CD4-positive, alpha-beta T cell (primary cell): ENCODE measurements at regions of chr18 and their contacts with region 1.

Region 1: DNA sequence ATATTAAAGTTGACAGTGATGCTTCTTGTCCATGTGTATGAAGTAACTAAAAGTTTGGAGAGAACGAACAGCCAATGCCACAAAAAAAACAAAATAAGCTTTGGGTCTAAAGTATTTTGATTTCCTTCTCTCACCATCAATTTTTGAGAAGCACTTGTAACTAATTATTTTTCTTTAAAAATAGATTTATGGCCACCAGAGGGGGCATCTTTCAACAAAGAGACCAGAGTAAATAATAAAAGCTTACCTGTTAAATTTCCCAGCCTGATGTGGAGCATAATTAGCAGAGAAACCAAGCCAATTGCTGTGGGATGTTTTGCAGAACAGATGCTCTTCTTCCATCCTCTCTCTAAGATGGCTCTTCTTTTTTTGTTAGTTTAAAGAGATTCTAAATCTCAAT is 29.0 kb downstream of the LINC00305 start:
- DNase-seq: no peak
- ATAC-seq: no peak
- H3K4me3 ChIP-seq: no peak overlapping the region
- H3K4me3 Mint-ChIP-seq: no peak overlapping the region
- H3K27ac ChIP-seq: no peak overlapping the region
- H3K27ac Mint-ChIP-seq: no peak overlapping the region
- H3K4me1 ChIP-seq: no peaks in the 10 kb centered on the region
- H3K4me1 Mint-ChIP-seq: no peaks in the 10 kb centered on the region
- H3K27me3 ChIP-seq: no peaks in the 10 kb centered on the region
- H3K27me3 Mint-ChIP-seq: no peaks in the 10 kb centered on the region
- CTCF ChIP-seq: no peak

Region 2: GRCh38 chr18:63410792-63411191 is 709.1 kb before region 1 on chr18:
- CTCF ChIA-PET with region 1: no interaction called
- POLR2A ChIA-PET with region 1: no interaction called
- intact Hi-C with region 1: no loop called
- DNase-seq: no peak
- ATAC-seq: no peak
- H3K4me3 ChIP-seq: no peak overlapping the region
- H3K4me3 Mint-ChIP-seq: no peak overlapping the region
- H3K27ac ChIP-seq: no peak overlapping the region
- H3K27ac Mint-ChIP-seq: peak overlapping the region; percentile 73
- H3K4me1 ChIP-seq: peaks cover 11% of the 10 kb centered on the region
- H3K4me1 Mint-ChIP-seq: peaks cover 57% of the 10 kb centered on the region
- H3K27me3 ChIP-seq: no peaks in the 10 kb centered on the region
- H3K27me3 Mint-ChIP-seq: no peaks in the 10 kb centered on the region
- CTCF ChIP-seq: no peak

Region 3: GRCh38 chr18:64171576-64171975 is 51.7 kb after region 1 on chr18:
- CTCF ChIA-PET with region 1: no interaction called
- POLR2A ChIA-PET with region 1: no interaction called
- intact Hi-C with region 1: loop called in 1 of 2 experiments (anchors 5 kb)
- DNase-seq: no peak
- ATAC-seq: no peak
- H3K4me3 ChIP-seq: no peak overlapping the region
- H3K4me3 Mint-ChIP-seq: no peak overlapping the region
- H3K27ac ChIP-seq: no peak overlapping the region
- H3K27ac Mint-ChIP-seq: no peak overlapping the region
- H3K4me1 ChIP-seq: no peaks in the 10 kb centered on the region
- H3K4me1 Mint-ChIP-seq: no peaks in the 10 kb centered on the region
- H3K27me3 ChIP-seq: no peaks in the 10 kb centered on the region
- H3K27me3 Mint-ChIP-seq: no peaks in the 10 kb centered on the region
- CTCF ChIP-seq: no peak